HAP-1 (cell line): ENCODE measurements at regions of chr12 and their contacts with region 1.

Region 1: GRCh38 chr12:117119592-117120198 is 20.5 kb upstream of the TESC start:
- DNase-seq: peak; percentile 42 to 66
- H3K4me3 ChIP-seq: no peak overlapping the region
- H3K4me1 ChIP-seq: no peaks in the 10 kb centered on the region
- H3K27me3 ChIP-seq: no peaks in the 10 kb centered on the region

Region 2: GRCh38 chr12:116703214-116703795 is 416.4 kb before region 1 on chr12:
- in situ Hi-C with region 1: loop called (anchors 10 kb)
- DNase-seq: peak; percentile 39 to 82
- H3K4me3 ChIP-seq: no peak overlapping the region
- H3K4me1 ChIP-seq: peaks cover under 1% of the 10 kb centered on the region; the same call in 1 of the 2 replicates
- H3K27me3 ChIP-seq: no peaks in the 10 kb centered on the region; the same call in 1 of the 2 replicates

Region 3: DNA sequence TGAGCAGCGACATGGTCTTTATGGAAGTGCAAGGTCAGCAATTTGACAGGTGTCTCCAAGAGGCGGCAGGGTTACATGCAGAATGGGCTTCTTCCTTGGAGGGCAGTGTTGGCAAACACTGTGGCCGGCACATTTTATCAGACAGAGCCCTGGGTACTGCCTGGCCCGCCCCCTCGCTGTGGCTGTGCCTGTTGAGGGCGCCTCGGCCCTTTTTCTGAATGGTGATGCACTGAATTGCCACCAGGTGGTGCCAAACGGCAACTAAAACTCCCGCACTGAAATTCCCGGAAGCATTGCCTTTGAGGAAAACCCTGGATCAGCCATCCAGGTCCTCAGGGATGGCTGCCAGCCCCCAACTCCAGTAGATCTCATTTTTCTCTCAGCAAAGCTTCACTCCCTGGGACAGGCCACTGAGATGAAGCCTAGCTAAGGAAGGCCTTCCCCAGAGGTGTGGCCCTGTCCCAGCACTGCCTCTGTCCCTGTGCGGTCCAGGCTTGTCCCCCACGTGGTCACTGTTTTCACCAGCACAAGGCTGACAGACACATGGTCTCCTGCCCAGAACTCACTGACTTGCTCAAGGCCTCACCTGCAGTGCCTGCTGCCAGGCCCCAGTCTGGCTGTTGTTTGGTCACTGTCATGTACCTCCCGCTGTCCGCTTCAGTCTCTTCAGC is 94.1 kb before region 1 on chr12:
- in situ Hi-C with region 1: loop called (anchors 5 kb)
- DNase-seq: peak; percentile 73 to 80
- H3K4me3 ChIP-seq: no peak overlapping the region
- H3K4me1 ChIP-seq: no peaks in the 10 kb centered on the region
- H3K27me3 ChIP-seq: no peaks in the 10 kb centered on the region